T-cell (primary cell): ENCODE measurements at regions of chr2 and their contacts with region 1.

Region 1: GRCh38 chr2:201517094-201517493 is 65.6 kb downstream of the STRADB start:
- DNase-seq: no peak
- ATAC-seq: no peak
- H3K4me3 ChIP-seq: no peak overlapping the region
- H3K4me3 Mint-ChIP-seq: no peak overlapping the region
- H3K27ac ChIP-seq: no peak overlapping the region
- H3K27ac Mint-ChIP-seq: no peak overlapping the region
- H3K4me1 ChIP-seq: no peaks in the 10 kb centered on the region
- H3K4me1 Mint-ChIP-seq: no peaks in the 10 kb centered on the region
- H3K27me3 ChIP-seq: no peaks in the 10 kb centered on the region
- H3K27me3 Mint-ChIP-seq: no peaks in the 10 kb centered on the region

Region 2: DNA sequence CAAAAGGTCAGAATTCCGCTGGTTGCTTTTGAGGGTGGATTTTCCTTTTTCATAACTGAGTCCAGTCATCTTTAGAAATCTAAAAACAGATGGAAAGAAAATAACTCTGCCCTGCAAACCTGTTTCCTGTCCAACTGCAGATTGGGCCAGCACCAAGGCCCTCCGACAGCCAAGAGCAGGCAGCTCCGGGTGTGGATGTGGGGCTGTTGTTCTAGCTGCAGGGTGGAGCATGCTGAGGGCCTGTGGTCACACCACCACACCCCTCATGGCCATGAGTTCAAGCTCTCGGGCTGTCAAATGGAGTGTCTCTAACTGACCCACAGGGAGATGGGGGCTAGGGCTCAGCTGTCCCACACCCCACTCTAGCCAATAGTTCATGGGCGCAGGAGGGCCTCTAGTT is 774.7 kb before region 1 on chr2:
- CTCF ChIA-PET with region 1: no interaction called
- POLR2A ChIA-PET with region 1: no interaction called
- DNase-seq: no peak
- ATAC-seq: no peak
- H3K4me3 ChIP-seq: no peak overlapping the region
- H3K4me3 Mint-ChIP-seq: no peak overlapping the region
- H3K27ac ChIP-seq: no peak overlapping the region
- H3K27ac Mint-ChIP-seq: no peak overlapping the region
- H3K4me1 ChIP-seq: no peaks in the 10 kb centered on the region
- H3K4me1 Mint-ChIP-seq: no peaks in the 10 kb centered on the region
- H3K27me3 ChIP-seq: no peaks in the 10 kb centered on the region
- H3K27me3 Mint-ChIP-seq: peaks cover 3 to 5% of the 10 kb centered on the region in 2 donors

Region 3: GRCh38 chr2:201406077-201406662 is 110.9 kb before region 1 on chr2:
- CTCF ChIA-PET with region 1: no interaction called
- POLR2A ChIA-PET with region 1: no interaction called
- DNase-seq: no peak
- ATAC-seq: peak in 1 of 4 experiments; percentile 33
- H3K4me3 ChIP-seq: no peak overlapping the region
- H3K4me3 Mint-ChIP-seq: peak overlapping the region in 1 of 3 donors; percentile 24
- H3K27ac ChIP-seq: no peak overlapping the region
- H3K27ac Mint-ChIP-seq: peak overlapping the region; percentile 11 to 31
- H3K4me1 ChIP-seq: peaks cover 3 to 5% of the 10 kb centered on the region in 2 experiments
- H3K4me1 Mint-ChIP-seq: peaks cover 49 to 67% (median 59%) of the 10 kb centered on the region in 3 donors
- H3K27me3 ChIP-seq: no peaks in the 10 kb centered on the region
- H3K27me3 Mint-ChIP-seq: no peaks in the 10 kb centered on the region

Region 4: GRCh38 chr2:201707753-201708152 is 190.7 kb after region 1 on chr2:
- CTCF ChIA-PET with region 1: no interaction called
- POLR2A ChIA-PET with region 1: interaction called in 1 of 2 experiments, 11 read pairs
- DNase-seq: no peak
- ATAC-seq: no peak
- H3K4me3 ChIP-seq: no peak overlapping the region
- H3K4me3 Mint-ChIP-seq: no peak overlapping the region
- H3K27ac ChIP-seq: no peak overlapping the region
- H3K27ac Mint-ChIP-seq: peak overlapping the region in 1 of 2 donors; percentile 66
- H3K4me1 ChIP-seq: no peaks in the 10 kb centered on the region
- H3K4me1 Mint-ChIP-seq: peaks cover 0 to 11% (median 6%) of the 10 kb centered on the region in 3 donors
- H3K27me3 ChIP-seq: no peaks in the 10 kb centered on the region
- H3K27me3 Mint-ChIP-seq: no peaks in the 10 kb centered on the region